Calu3 (cell line): ENCODE measurements at regions of chr6 and their contacts with region 1.

Region 1: GRCh38 chr6:35500782-35501181 is 3.9 kb upstream of the TEAD3 start:
- DNase-seq: no peak
- H3K4me3 Mint-ChIP-seq: no peak overlapping the region
- H3K27ac Mint-ChIP-seq: no peak overlapping the region
- H3K4me1 Mint-ChIP-seq: peaks cover 10% of the 10 kb centered on the region
- H3K27me3 Mint-ChIP-seq: peaks cover 2% of the 10 kb centered on the region
- CTCF ChIP-seq: no peak

Region 2: GRCh38 chr6:35522660-35523658 is 22.2 kb after region 1 on chr6:
- CTCF ChIA-PET with region 1: interaction called, 10 read pairs
- intact Hi-C with region 1: no loop called
- DNase-seq: peak; percentile 81
- H3K4me3 Mint-ChIP-seq: peak overlapping the region; percentile 22
- H3K27ac Mint-ChIP-seq: no peak overlapping the region
- H3K4me1 Mint-ChIP-seq: no peaks in the 10 kb centered on the region
- H3K27me3 Mint-ChIP-seq: peaks cover 38% of the 10 kb centered on the region
- CTCF ChIP-seq: peak; percentile 97